Activated naive CD4-positive, alpha-beta T cell treated with anti-CD3 and anti-CD28 coated beads for 36 hours (primary cell): ENCODE measurements at regions of chr6 and their contacts with region 1.

Region 1: DNA sequence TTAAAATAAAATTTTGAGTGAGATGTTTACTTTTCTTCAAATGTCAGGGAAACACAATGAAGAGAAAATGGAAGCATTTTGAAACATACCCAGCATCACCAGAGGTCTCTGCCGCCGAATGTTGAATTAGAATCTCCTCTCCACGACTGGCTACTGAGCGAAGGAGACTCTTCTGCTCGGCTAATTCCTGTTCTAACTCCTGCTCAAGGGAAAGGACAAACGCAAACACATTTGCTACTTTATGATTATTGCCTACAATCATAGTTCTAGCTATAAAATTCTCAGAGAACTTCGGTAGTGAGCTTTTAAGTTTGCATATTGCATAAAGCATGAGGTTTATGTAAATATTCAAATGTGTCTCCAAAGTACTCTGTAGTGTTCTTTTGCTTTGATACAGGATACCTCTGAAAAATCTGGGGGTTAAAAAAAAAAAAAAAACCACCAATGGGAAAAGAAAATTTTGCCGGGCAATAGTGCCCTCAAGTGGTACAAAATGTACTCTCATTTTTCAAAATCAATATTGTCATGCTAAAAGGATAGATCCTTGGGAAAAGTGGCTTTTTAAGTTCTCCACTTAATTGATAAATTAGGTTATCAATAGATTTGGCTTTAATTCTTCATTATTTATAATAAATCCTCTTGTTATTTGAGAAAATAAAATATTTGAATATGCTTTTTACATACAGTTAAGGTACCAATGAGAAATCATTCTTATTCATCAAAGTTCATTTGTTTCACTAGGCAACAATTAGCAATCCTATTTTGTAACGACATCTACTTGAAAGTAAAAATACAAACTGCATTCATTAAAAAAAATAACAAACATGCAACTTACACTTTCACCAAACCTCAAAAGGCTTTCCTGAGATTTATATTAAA is 369.0 kb downstream of the SYNE1 start:
- DNase-seq: peak; percentile 53
- H3K4me3 Mint-ChIP-seq: no peak overlapping the region
- H3K27ac Mint-ChIP-seq: no peak overlapping the region
- H3K4me1 Mint-ChIP-seq: no peaks in the 10 kb centered on the region
- H3K27me3 Mint-ChIP-seq: no peaks in the 10 kb centered on the region

Region 2: GRCh38 chr6:151765444-151765886 is 502.7 kb before region 1 on chr6:
- CTCF ChIA-PET with region 1: interaction called, 7 read pairs
- intact Hi-C with region 1: loop called (anchors 1 kb)
- DNase-seq: peak; percentile 73
- H3K4me3 Mint-ChIP-seq: no peak overlapping the region
- H3K27ac Mint-ChIP-seq: no peak overlapping the region
- H3K4me1 Mint-ChIP-seq: peaks cover 11% of the 10 kb centered on the region
- H3K27me3 Mint-ChIP-seq: peaks cover 4% of the 10 kb centered on the region

Region 3: GRCh38 chr6:152039217-152039616 is 229.0 kb before region 1 on chr6:
- CTCF ChIA-PET with region 1: no interaction called
- intact Hi-C with region 1: no loop called
- DNase-seq: no peak
- H3K4me3 Mint-ChIP-seq: no peak overlapping the region
- H3K27ac Mint-ChIP-seq: no peak overlapping the region
- H3K4me1 Mint-ChIP-seq: no peaks in the 10 kb centered on the region
- H3K27me3 Mint-ChIP-seq: no peaks in the 10 kb centered on the region

Region 4: GRCh38 chr6:152206072-152206818 is 62.0 kb before region 1 on chr6:
- CTCF ChIA-PET with region 1: interaction called, 5 read pairs
- intact Hi-C with region 1: loop called (anchors 1 kb)
- DNase-seq: peak; percentile 66
- H3K4me3 Mint-ChIP-seq: no peak overlapping the region
- H3K27ac Mint-ChIP-seq: no peak overlapping the region
- H3K4me1 Mint-ChIP-seq: peaks cover 6% of the 10 kb centered on the region
- H3K27me3 Mint-ChIP-seq: no peaks in the 10 kb centered on the region

Region 5: GRCh38 chr6:152338335-152339125 is 70.3 kb after region 1 on chr6:
- CTCF ChIA-PET with region 1: interaction called, 3 read pairs
- intact Hi-C with region 1: loop called (anchors 1 kb)
- DNase-seq: peak; percentile 69
- H3K4me3 Mint-ChIP-seq: no peak overlapping the region
- H3K27ac Mint-ChIP-seq: no peak overlapping the region
- H3K4me1 Mint-ChIP-seq: no peaks in the 10 kb centered on the region
- H3K27me3 Mint-ChIP-seq: no peaks in the 10 kb centered on the region